ENCODE measurements at regions of chr9 and their contacts with region 1.

Region 1: DNA sequence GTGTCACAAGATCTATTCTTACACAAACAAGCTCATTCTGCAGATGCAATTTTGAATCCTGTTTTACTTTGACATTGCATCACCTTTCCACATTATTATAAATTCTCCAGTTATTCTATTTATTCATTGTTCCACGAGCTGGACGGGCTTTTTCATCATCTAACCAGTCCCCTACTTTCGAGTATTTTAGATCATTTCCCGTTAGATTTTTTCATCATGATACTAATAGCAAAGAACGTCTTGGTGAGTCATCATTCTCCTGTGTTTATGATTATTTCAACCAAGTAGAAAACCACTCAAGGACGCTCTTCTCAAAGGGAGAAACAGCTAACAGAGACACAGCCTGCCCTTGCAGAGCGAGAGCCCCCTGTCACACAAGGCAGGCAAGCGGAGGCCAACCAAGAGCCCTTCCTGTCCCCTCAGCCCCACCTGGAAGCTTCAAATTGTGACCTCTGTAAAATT is 15.1 kb downstream of the BBLN start:
- DNase-seq: no peak
- ATAC-seq: no peak
- H3K4me3 ChIP-seq: no peak overlapping the region
- H3K27ac ChIP-seq: no peak overlapping the region
- H3K4me1 ChIP-seq: no peaks in the 10 kb centered on the region
- CTCF ChIP-seq: no peak
- EP300 ChIP-seq: no peak
- POLR2A ChIP-seq: no peak
- RAD21 ChIP-seq: no peak

Region 2: GRCh38 chr9:128191406-128192046 is 16.4 kb after region 1 on chr9 and contains the start of gene CIZ1:
- CTCF ChIA-PET with region 1: interaction called, 41 read pairs
- POLR2A ChIA-PET with region 1: no interaction called
- DNase-seq: peak; percentile 84 to 85
- ATAC-seq: peak; percentile 86 to 90
- H3K4me3 ChIP-seq: peak within 1 kb of the TSS; percentile 86
- H3K27ac ChIP-seq: peak within 1 kb of the TSS; percentile 98 to 99
- H3K4me1 ChIP-seq: peaks cover 17% of the 10 kb centered on the region
- CTCF ChIP-seq: peak; percentile 92
- EP300 ChIP-seq: no peak
- POLR2A ChIP-seq: peak; percentile 59
- RAD21 ChIP-seq: peak in 1 of 2 experiments; percentile 37; a peak in 1 of 5 replicates
- polyA plus RNA-seq, gene CIZ1: 39.2 and 50.3 TPM in 2 replicates

Region 3: GRCh38 chr9:128249908-128250838 is 75.0 kb after region 1 on chr9:
- CTCF ChIA-PET with region 1: no interaction called
- POLR2A ChIA-PET with region 1: no interaction called
- DNase-seq: peak; percentile 60 to 90
- ATAC-seq: peak; percentile 27 to 78; a peak in 4 of 6 replicates
- H3K4me3 ChIP-seq: no peak overlapping the region
- H3K27ac ChIP-seq: no peak overlapping the region
- H3K4me1 ChIP-seq: no peaks in the 10 kb centered on the region
- CTCF ChIP-seq: no peak
- EP300 ChIP-seq: no peak
- POLR2A ChIP-seq: no peak
- RAD21 ChIP-seq: no peak

Measured in A549 (cell line).